Mammary epithelial cell (primary cell): ENCODE measurements at regions of chr2 and their contacts with region 1.

Region 1: DNA sequence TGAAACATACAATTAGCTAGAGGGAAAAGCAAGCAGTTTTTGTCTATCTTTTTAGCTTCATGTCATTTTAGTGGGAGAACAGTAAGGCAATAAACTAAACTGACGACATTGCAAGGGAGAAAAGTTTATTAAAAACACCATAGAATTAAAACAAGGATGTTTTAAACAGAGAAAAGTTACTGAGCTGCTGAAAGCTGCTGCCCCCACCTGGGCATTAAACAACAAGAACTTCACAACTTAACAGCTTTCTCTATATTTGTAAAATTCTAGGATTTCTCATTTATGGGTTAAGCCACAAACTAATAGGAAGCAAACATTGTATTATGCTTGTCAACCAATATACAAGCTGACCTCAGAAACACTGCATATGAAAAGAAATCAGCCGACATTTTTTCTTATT is 289.2 kb downstream of the ERBB4 start:
- DNase-seq: no peak
- H3K4me3 ChIP-seq: no peak overlapping the region
- H3K27ac ChIP-seq: no peak overlapping the region
- H3K4me1 ChIP-seq: no peaks in the 10 kb centered on the region
- H3K27me3 ChIP-seq: no peaks in the 10 kb centered on the region
- CTCF ChIP-seq: peak; percentile 14 to 54

Region 2: GRCh38 chr2:211745295-211746097 is 504.0 kb before region 1 on chr2:
- CTCF ChIA-PET with region 1: no interaction called
- dilution Hi-C with region 1: no loop called
- in situ Hi-C with region 1: no loop called
- intact Hi-C with region 1: loop called (anchors 2 kb)
- DNase-seq: peak; percentile 45
- H3K4me3 ChIP-seq: no peak overlapping the region
- H3K27ac ChIP-seq: no peak overlapping the region
- H3K4me1 ChIP-seq: no peaks in the 10 kb centered on the region
- H3K27me3 ChIP-seq: no peaks in the 10 kb centered on the region
- CTCF ChIP-seq: peak; percentile 89 to 96

Region 3: DNA sequence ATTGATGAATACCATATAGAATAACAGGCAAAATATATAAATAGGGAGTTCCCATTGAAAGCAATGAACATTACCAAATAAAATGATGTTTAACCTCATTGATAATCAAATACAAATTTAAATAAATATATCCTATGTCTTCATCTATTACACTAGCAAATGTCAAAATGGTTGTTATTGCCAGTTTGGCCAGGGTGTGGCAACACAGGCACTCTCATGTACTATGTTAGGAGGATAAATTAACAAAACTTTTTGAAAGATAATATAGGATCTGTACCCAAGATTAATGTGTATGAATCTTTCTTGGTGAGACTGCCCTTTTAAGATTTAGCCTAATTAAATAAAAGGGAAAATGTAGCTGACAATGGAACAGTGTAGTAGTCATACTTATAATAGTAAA is 370.1 kb before region 1 on chr2:
- CTCF ChIA-PET with region 1: interaction called, 3 read pairs
- dilution Hi-C with region 1: no loop called
- in situ Hi-C with region 1: no loop called
- intact Hi-C with region 1: loop called (anchors 5 kb)
- DNase-seq: no peak
- H3K4me3 ChIP-seq: no peak overlapping the region
- H3K27ac ChIP-seq: no peak overlapping the region
- H3K4me1 ChIP-seq: no peaks in the 10 kb centered on the region
- H3K27me3 ChIP-seq: no peaks in the 10 kb centered on the region
- CTCF ChIP-seq: peak; percentile 27 to 54

Region 4: DNA sequence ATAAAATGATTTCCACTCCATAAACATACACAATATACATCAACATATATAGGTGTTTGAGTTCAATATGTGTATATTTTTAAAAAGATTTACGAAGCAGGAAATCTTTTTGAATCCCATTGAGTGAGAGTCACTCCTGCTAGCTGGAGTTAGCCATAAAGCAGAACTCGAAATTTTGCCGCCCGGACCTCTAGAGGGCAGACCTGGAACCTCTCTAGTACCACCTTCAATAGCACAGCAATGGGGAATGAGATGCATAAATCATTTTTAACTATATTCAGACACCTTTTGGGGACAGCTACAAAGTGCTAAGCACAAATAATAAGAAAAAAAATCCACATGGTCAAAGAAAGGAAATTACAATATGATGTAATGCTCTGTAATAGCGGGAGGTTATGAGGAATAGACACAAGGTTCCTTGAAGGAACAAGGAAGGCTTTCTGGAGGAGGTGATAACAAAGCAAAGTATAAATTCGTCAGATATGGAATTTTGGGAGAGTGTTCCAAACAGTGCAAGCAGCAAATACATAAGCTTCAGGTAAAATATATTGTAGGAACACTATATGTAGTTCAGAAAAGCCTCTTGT is 244.3 kb before region 1 on chr2:
- CTCF ChIA-PET with region 1: no interaction called
- dilution Hi-C with region 1: no loop called
- in situ Hi-C with region 1: no loop called
- intact Hi-C with region 1: loop called (anchors 5 kb)
- DNase-seq: peak; percentile 20
- H3K4me3 ChIP-seq: no peak overlapping the region
- H3K27ac ChIP-seq: no peak overlapping the region
- H3K4me1 ChIP-seq: no peaks in the 10 kb centered on the region
- H3K27me3 ChIP-seq: no peaks in the 10 kb centered on the region
- CTCF ChIP-seq: peak; percentile 54 to 73

Region 5: DNA sequence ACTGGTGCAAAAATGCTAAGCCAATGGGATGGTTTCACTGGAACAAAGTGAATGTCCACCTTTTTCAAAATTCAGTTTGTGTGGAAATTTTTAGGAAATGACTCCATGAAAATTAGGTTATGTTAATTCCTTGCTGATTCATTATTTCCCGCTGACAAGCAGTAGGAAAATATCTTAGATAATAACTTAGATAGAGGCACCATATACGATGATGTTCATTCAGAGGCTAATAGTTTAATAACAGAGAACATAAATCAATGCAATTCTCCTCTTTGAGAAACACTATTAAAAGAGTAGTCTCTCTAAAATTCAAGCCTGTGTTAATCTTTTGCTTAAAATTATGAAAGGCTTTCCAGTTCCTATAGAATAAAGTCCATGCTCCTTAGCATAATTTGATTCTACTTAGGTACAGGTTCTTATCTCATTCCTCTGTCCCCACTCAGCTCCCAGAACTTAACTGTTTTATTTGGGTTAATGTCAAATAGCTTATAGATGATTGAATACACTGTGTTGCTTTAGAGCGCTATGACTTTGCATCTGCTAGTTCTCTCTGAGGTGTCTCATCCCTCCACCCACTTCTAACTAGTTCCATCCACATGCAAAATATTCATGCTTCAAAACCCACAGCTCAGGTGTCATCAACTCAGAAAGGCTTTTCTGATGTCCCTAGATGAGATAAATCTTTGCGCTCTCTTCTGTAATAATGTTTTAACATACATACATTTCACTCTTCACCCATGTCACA is 214.4 kb before region 1 on chr2:
- CTCF ChIA-PET with region 1: no interaction called
- dilution Hi-C with region 1: no loop called
- in situ Hi-C with region 1: no loop called
- intact Hi-C with region 1: no loop called
- DNase-seq: no peak
- H3K4me3 ChIP-seq: no peak overlapping the region
- H3K27ac ChIP-seq: no peak overlapping the region
- H3K4me1 ChIP-seq: peaks cover 4% of the 10 kb centered on the region
- H3K27me3 ChIP-seq: no peaks in the 10 kb centered on the region
- CTCF ChIP-seq: no peak

Region 6: DNA sequence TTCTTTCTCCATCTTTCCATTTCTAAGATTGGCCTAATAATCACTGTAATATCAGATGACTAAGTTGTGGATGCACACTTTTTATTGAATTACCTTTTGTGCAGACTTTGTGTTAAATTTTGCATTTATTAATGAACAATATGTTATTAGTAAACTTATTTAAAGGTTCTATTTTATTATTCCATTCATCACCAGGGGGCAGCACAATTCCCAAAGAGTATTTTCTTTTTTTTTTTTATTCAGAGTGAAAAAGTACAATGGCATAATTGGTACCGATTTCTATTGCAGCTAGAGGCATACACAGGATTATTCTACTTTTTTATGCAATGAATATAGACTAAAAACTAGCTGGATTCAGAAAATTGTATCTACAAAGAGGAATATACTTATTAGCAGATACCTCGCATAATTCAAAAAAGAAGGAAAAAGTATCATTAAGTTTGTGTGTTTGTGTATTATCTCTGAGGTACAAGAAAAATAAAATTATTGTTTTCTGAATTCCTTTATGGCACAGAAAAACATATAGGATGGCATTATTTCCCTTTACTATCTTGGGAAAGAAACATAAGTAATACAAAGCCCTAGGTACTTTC is 101.4 kb before region 1 on chr2:
- CTCF ChIA-PET with region 1: interaction called, 4 read pairs
- dilution Hi-C with region 1: no loop called
- in situ Hi-C with region 1: no loop called
- intact Hi-C with region 1: loop called (anchors 1 kb)
- DNase-seq: no peak
- H3K4me3 ChIP-seq: no peak overlapping the region
- H3K27ac ChIP-seq: no peak overlapping the region
- H3K4me1 ChIP-seq: no peaks in the 10 kb centered on the region
- H3K27me3 ChIP-seq: no peaks in the 10 kb centered on the region
- CTCF ChIP-seq: peak; percentile 35 to 38

Region 7: GRCh38 chr2:212832211-212833195 is 583.1 kb after region 1 on chr2:
- CTCF ChIA-PET with region 1: no interaction called
- dilution Hi-C with region 1: no loop called
- in situ Hi-C with region 1: no loop called
- intact Hi-C with region 1: no loop called
- DNase-seq: no peak
- H3K4me3 ChIP-seq: no peak overlapping the region
- H3K27ac ChIP-seq: no peak overlapping the region
- H3K4me1 ChIP-seq: no peaks in the 10 kb centered on the region
- H3K27me3 ChIP-seq: no peaks in the 10 kb centered on the region
- CTCF ChIP-seq: no peak